ENCODE measurements at regions of chr9 and their contacts with region 1.

Region 1: DNA sequence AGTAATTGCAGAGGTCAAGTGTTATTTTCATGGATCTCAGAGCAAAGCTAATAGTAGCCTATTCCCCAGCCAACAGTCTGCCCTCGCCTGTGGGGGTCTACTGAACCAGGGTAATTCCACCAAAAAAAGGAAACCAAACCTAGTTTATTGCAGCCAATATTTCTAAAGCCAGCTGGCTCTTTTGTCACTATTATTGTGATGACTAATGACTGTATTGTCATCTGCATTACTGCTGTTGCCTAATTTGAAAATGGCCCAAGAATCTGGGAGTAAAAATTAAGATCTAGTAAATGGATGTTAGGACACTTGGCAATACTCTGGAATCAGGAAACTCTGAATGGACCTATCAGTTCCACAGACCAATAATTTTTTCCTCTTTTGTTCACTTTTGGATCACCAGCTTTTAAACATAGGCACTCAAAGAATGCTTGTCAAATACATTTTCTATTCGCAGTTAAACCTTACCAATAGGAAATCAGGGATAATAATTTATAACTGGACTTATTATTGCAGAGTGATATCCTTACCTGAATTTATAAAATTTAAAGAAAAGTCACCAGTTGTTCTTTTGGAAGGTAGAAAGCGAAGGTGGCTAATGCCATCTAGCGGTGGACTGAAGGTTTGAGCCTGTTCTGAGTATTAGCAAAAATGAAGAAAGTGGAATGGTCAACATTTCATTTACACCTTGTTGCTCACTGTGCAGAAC is 69.2 kb downstream of the SYK start:
- DNase-seq: peak in 2 of 10 donors; percentile 32 to 50
- H3K4me3 ChIP-seq: no peak overlapping the region
- H3K27ac ChIP-seq: no peak overlapping the region
- H3K27me3 ChIP-seq: peaks cover 0 to 9% (median 0%) of the 10 kb centered on the region in 45 donors
- CTCF ChIP-seq: peak; percentile 68 to 96 (median 86)

Region 2: GRCh38 chr9:90142580-90142979 is 728.2 kb before region 1 on chr9:
- intact Hi-C with region 1: loop called in 1 of 2 experiments (anchors 5 kb)
- DNase-seq: peak in 3 of 10 donors; percentile 11 to 46 (median 26)
- H3K4me3 ChIP-seq: no peak overlapping the region
- H3K27ac ChIP-seq: no peak overlapping the region
- H3K27me3 ChIP-seq: peaks cover 0 to 10% (median 0%) of the 10 kb centered on the region in 45 donors
- CTCF ChIP-seq: peak; percentile 45 to 80 (median 64)